ENCODE measurements at regions of chr14 and their contacts with region 1.

Region 1: GRCh38 chr14:61561657-61562276 is 133.5 kb upstream of the HIF1A start:
- DNase-seq: no peak
- H3K4me3 Mint-ChIP-seq: no peak overlapping the region
- H3K27ac Mint-ChIP-seq: peak overlapping the region; percentile 83
- H3K4me1 Mint-ChIP-seq: peaks cover 66% of the 10 kb centered on the region
- H3K27me3 Mint-ChIP-seq: no peaks in the 10 kb centered on the region

Region 2: DNA sequence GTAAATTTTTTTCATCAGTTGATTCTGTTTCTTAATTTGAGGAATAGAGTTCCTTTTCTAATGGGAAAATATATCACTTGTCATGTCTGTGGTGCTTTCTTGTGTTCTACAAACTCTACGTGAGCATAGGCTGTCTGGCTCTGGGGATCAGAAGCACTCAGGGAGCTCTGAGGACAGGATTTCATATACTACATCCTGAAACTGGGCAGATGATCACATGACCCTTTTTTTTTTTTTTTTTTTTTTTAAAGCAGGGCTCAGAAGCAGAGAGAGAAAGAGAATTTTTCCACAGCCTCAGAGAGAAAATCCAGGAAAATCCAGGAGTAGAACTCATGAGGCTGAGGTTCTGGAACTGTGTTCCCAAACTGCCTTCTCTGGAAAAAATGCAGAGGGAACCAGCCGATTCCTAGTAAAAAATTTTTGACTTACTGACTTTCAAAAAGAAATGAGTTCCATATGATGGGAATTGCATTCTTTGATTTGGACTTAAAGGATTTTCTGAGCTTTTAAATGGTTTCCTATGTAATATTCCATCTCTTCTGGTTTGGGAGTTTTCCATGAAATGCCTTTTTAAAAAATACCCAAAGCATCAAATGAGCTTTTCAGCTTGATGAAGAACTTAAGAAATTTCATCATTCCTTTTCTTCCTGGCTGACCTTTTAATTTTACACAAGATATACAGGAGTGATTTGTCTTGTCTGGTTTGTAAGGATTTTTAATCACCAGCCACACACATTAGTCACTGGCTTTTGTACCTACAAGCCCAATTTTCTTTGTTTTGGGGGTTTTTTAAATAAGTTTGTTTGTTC is 49.5 kb before region 1 on chr14:
- CTCF ChIA-PET with region 1: interaction called, 4 read pairs
- POLR2A ChIA-PET with region 1: interaction called, 6 read pairs
- intact Hi-C with region 1: loop called (anchors 2 kb)
- DNase-seq: no peak
- H3K4me3 Mint-ChIP-seq: peak overlapping the region; percentile 51
- H3K27ac Mint-ChIP-seq: peak overlapping the region; percentile 98
- H3K4me1 Mint-ChIP-seq: peaks cover 95% of the 10 kb centered on the region
- H3K27me3 Mint-ChIP-seq: no peaks in the 10 kb centered on the region

Region 3: GRCh38 chr14:61537563-61538463 is 24.0 kb before region 1 on chr14:
- CTCF ChIA-PET with region 1: interaction called, 3 read pairs
- POLR2A ChIA-PET with region 1: interaction called, 5 read pairs
- intact Hi-C with region 1: loop called (anchors 2 kb)
- DNase-seq: peak; percentile 71
- H3K4me3 Mint-ChIP-seq: peak overlapping the region; percentile 1
- H3K27ac Mint-ChIP-seq: peak overlapping the region; percentile 77
- H3K4me1 Mint-ChIP-seq: peaks cover 81% of the 10 kb centered on the region
- H3K27me3 Mint-ChIP-seq: no peaks in the 10 kb centered on the region

Region 4: DNA sequence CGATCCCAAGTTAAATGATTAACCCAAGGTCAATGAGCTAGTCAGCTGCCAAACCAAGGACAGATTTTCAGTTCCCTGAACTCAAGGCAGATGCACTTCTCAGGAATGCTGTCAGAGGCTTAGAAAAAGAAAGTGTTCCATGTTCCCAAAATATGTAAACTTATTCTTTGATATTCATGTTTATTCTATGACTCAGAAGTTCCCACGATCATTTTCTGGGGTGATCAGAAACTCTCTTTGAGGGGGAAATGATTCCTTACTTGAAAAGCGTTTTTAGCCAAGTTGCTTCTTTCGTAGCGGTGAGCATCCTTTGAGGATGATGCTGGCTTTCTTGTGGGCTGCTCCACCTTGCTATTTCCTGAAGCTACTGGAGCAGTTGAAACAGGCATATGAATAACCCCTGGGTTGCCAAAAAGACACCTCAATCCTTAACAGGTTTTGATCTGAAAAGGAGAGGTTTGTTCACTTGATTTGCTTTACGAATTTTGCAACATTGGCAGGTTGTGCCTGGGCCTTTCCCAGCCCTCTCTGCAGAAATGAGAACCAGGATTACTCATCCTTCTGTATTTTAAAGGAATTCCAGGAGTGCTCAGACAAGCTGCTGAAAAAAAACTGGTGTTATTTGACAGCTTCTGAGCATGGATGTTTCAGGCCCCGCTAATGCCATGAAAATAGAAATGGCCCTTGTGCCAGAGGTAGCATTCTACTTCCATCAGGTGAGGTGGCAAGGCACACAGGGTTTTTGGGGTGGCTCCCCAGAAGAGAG is 12.2 kb after region 1 on chr14:
- CTCF ChIA-PET with region 1: interaction called, 4 read pairs
- POLR2A ChIA-PET with region 1: interaction called, 7 read pairs
- intact Hi-C with region 1: loop called (anchors 2 kb)
- DNase-seq: peak; percentile 52
- H3K4me3 Mint-ChIP-seq: peak overlapping the region; percentile 7
- H3K27ac Mint-ChIP-seq: peak overlapping the region; percentile 49
- H3K4me1 Mint-ChIP-seq: peaks cover 58% of the 10 kb centered on the region
- H3K27me3 Mint-ChIP-seq: no peaks in the 10 kb centered on the region

Region 5: GRCh38 chr14:61733972-61734371 is 172.2 kb after region 1 on chr14:
- CTCF ChIA-PET with region 1: no interaction called
- POLR2A ChIA-PET with region 1: no interaction called
- intact Hi-C with region 1: no loop called
- DNase-seq: no peak
- H3K4me3 Mint-ChIP-seq: no peak overlapping the region
- H3K27ac Mint-ChIP-seq: no peak overlapping the region
- H3K4me1 Mint-ChIP-seq: peaks cover 34% of the 10 kb centered on the region
- H3K27me3 Mint-ChIP-seq: no peaks in the 10 kb centered on the region

Measured in activated CD4-positive, alpha-beta memory T cell treated with anti-CD3 and anti-CD28 coated beads for 36 hours (primary cell).